K562 (cell line): ENCODE measurements at regions of chr4 and their contacts with region 1.

Region 1: DNA sequence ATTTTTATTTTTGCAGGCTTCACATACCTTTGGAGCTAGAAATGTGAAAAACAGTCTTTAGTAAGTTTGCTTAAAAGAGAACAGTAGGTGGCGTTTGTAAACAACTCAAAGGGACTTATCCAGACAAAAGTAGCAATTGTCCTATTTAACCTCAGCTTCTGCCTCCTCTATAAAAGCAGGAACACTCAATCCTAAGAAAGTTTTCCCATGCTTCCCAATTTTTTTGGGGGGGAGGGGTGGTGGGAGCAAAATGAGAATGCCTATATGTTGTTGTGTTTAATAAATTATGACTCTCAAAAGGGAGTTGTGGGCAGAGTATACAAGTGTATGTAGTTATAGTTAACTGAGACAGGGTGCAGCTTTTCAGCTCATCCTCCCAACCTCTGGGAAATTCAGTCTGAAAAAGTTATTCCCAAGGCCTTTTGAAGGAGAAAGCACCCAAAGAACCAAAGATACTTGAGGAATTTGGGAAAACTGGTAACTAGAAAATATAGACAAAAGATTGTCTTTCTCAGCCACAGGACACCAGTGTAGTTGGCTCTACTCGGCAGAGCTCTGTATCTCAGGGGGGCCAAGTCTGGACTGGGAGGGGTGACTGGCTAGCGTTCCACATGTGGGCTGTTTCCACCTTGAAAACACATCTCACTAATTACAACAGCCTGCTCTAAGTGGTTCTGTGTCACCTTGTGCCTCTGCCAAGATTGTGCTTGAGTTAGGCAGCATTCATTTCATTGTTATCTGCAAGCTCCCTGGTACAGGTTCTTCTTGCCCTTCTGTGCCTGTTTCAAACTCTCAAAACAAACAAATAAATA is 2.8 kb downstream of the SFRP2 start:
- DNase-seq: no peak
- ATAC-seq: peak; percentile 75
- H3K4me3 ChIP-seq: no peak overlapping the region
- H3K27ac ChIP-seq: no peak overlapping the region
- H3K4me1 ChIP-seq: peaks cover 3 to 20% of the 10 kb centered on the region in 2 experiments; a peak in 4 of 5 replicates
- H3K27me3 ChIP-seq: peaks cover 34 to 46% of the 10 kb centered on the region in 2 experiments; a peak in 4 of 5 replicates
- CTCF ChIP-seq: peak; percentile 34 to 53 (median 36); a peak in 4 of 6 replicates
- EP300 ChIP-seq: no peak
- POLR2A ChIP-seq: no peak
- RAD21 ChIP-seq: peak; percentile 52 to 65

Region 2: GRCh38 chr4:153488006-153488891 is 297.9 kb before region 1 on chr4:
- CTCF ChIA-PET with region 1: no interaction called
- POLR2A ChIA-PET with region 1: no interaction called
- in situ Hi-C with region 1: no loop called
- intact Hi-C with region 1: no loop called
- DNase-seq: no peak
- ATAC-seq: no peak
- H3K4me3 ChIP-seq: no peak overlapping the region
- H3K27ac ChIP-seq: no peak overlapping the region; the same call in 2 of the 3 replicates
- H3K4me1 ChIP-seq: peaks cover 33% of the 10 kb centered on the region in 2 experiments
- H3K27me3 ChIP-seq: no peaks in the 10 kb centered on the region
- CTCF ChIP-seq: no peak
- EP300 ChIP-seq: no peak
- POLR2A ChIP-seq: no peak
- RAD21 ChIP-seq: no peak

Region 3: DNA sequence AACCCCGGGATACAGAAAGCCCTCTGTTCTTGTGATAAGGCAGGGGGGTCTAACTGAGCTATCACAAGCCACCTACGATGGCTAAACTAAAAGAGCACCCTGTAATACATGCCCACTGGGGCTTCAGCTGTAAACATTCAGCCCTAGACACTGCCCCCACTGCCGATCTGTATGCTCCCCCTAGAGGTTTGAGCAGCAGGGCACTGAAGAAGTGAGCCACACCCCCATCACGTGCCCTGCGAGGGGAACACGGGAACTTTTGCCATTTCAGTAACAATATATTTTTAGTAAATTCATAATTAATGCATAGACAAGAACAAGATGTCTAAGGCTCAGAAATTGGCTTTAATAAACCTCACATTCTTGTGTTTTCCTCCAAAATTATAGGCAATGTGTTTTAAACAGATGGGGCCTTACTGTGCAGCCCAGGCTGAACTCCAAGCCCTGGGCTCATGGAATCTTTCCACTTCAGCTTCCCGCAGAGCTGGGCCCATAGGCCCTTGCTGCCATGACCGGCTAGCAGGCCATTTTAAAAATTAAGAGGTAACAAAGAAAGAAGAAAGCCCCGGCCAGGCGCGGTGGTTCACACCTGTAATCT is 238.1 kb after region 1 on chr4:
- CTCF ChIA-PET with region 1: no interaction called
- POLR2A ChIA-PET with region 1: no interaction called
- in situ Hi-C with region 1: no loop called
- intact Hi-C with region 1: loop called (anchors 1 kb)
- DNase-seq: peak in 2 of 4 experiments; percentile 15 to 42
- ATAC-seq: peak; percentile 99
- H3K4me3 ChIP-seq: no peak overlapping the region
- H3K27ac ChIP-seq: no peak overlapping the region
- H3K4me1 ChIP-seq: peaks cover 0 to 4% of the 10 kb centered on the region in 2 experiments; a peak in 2 of 5 replicates
- H3K27me3 ChIP-seq: peaks cover 0 to 3% of the 10 kb centered on the region in 2 experiments; a peak in 1 of 5 replicates
- CTCF ChIP-seq: peak; percentile 52 to 67 (median 59)
- EP300 ChIP-seq: no peak
- POLR2A ChIP-seq: no peak
- RAD21 ChIP-seq: peak; percentile 55 to 69

Region 4: GRCh38 chr4:154314248-154314647 is 528.1 kb after region 1 on chr4:
- CTCF ChIA-PET with region 1: no interaction called
- POLR2A ChIA-PET with region 1: no interaction called
- in situ Hi-C with region 1: no loop called
- intact Hi-C with region 1: loop called (anchors 10 kb)
- DNase-seq: peak in 1 of 4 experiments; percentile 5
- ATAC-seq: no peak
- H3K4me3 ChIP-seq: no peak overlapping the region
- H3K27ac ChIP-seq: no peak overlapping the region
- H3K4me1 ChIP-seq: no peaks in the 10 kb centered on the region
- H3K27me3 ChIP-seq: no peaks in the 10 kb centered on the region
- CTCF ChIP-seq: peak in 1 of 3 experiments; percentile 34; a peak in 2 of 6 replicates
- EP300 ChIP-seq: no peak
- POLR2A ChIP-seq: no peak
- RAD21 ChIP-seq: peak; percentile 34 to 42